H1 (cell line): ENCODE measurements at regions of chr15 and their contacts with region 1.

Region 1: DNA sequence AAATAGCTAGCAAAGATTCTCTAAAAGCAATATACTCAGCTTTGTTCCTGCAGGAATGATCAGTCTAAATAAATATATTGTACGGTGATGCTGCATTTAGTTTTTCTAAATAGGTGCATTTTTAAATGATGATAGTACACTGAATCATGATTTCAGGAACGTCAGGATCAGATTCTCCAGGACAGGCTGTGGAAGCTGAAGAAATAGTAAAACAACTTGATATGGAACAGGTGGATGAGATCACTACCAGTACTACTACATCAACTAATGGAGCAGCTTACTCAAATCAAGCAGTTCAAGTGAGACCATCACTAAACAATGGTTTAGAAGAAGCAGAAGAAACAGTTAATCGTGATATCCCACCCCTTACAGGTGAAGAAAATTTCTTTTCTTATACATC is 46.3 kb upstream of the EIF3J start:
- DNase-seq: no peak
- H3K4me3 ChIP-seq: no peak overlapping the region
- H3K27ac ChIP-seq: no peak overlapping the region
- H3K4me1 ChIP-seq: no peaks in the 10 kb centered on the region
- H3K27me3 ChIP-seq: no peaks in the 10 kb centered on the region
- CTCF ChIP-seq: no peak
- EP300 ChIP-seq: no peak
- POLR2A ChIP-seq: no peak
- RAD21 ChIP-seq: no peak

Region 2: GRCh38 chr15:44458429-44458828 is 32.2 kb before region 1 on chr15:
- CTCF ChIA-PET with region 1: no interaction called
- POLR2A ChIA-PET with region 1: no interaction called
- DNase-seq: no peak
- H3K4me3 ChIP-seq: no peak overlapping the region
- H3K27ac ChIP-seq: no peak overlapping the region
- H3K4me1 ChIP-seq: no peaks in the 10 kb centered on the region
- H3K27me3 ChIP-seq: no peaks in the 10 kb centered on the region
- CTCF ChIP-seq: no peak
- EP300 ChIP-seq: no peak
- POLR2A ChIP-seq: no peak
- RAD21 ChIP-seq: no peak

Region 3: GRCh38 chr15:44471885-44472455 is 18.7 kb before region 1 on chr15:
- CTCF ChIA-PET with region 1: no interaction called
- POLR2A ChIA-PET with region 1: no interaction called
- DNase-seq: no peak
- H3K4me3 ChIP-seq: no peak overlapping the region
- H3K27ac ChIP-seq: no peak overlapping the region
- H3K4me1 ChIP-seq: no peaks in the 10 kb centered on the region
- H3K27me3 ChIP-seq: no peaks in the 10 kb centered on the region
- CTCF ChIP-seq: no peak
- EP300 ChIP-seq: no peak
- POLR2A ChIP-seq: no peak
- RAD21 ChIP-seq: no peak

Region 4: GRCh38 chr15:44501768-44502366 is 11.2 kb after region 1 on chr15:
- CTCF ChIA-PET with region 1: interaction called, 14 read pairs
- POLR2A ChIA-PET with region 1: interaction called, 4 read pairs
- DNase-seq: no peak
- H3K4me3 ChIP-seq: no peak overlapping the region
- H3K27ac ChIP-seq: no peak overlapping the region
- H3K4me1 ChIP-seq: no peaks in the 10 kb centered on the region
- H3K27me3 ChIP-seq: no peaks in the 10 kb centered on the region
- CTCF ChIP-seq: peak in 2 of 3 experiments; percentile 34 to 48; a peak in 2 of 4 replicates
- EP300 ChIP-seq: no peak
- POLR2A ChIP-seq: no peak
- RAD21 ChIP-seq: peak; percentile 59 to 62

Region 5: GRCh38 chr15:44516436-44516835 is 25.8 kb after region 1 on chr15:
- CTCF ChIA-PET with region 1: no interaction called
- POLR2A ChIA-PET with region 1: no interaction called
- DNase-seq: no peak
- H3K4me3 ChIP-seq: no peak overlapping the region
- H3K27ac ChIP-seq: no peak overlapping the region
- H3K4me1 ChIP-seq: no peaks in the 10 kb centered on the region
- H3K27me3 ChIP-seq: no peaks in the 10 kb centered on the region
- CTCF ChIP-seq: no peak
- EP300 ChIP-seq: no peak
- POLR2A ChIP-seq: no peak
- RAD21 ChIP-seq: no peak